ENCODE measurements at regions of chr17 and their contacts with region 1.

Region 1: DNA sequence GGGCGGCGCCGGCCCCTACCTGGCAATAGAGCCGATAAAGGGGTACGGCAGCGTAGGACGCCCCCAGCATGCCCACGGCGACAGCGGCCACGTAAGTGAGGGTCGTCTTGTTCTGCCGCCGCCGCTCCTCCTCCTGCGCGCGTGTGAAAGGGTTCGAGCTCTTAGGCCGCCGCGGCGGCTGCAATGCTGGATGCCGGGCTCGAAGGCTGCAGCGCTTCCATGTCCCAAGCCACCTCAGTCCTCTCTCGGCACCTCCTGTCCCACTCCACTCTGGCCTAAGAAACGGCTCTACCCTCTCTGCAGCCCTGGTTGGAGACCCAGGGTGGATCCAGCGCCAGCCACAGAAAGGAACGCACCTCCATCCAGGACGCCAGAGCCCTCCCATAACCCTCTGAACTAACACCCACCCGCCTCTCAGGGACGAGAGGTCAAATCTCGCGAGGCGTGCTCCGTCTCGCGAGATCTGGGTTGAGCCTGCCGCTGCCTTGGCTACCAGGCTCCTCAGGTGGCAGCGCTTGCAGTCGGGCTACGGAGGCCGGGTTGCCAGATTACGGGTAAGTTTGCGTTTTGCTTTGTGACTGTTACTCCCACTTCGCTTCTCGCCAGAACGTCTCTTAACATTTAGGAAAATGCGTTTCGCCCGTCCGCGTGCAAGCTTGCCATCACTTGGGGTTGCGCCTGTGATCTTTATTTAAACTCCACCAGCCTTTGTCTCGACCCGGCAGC is at the starts of genes COX11 and STXBP4:
- DNase-seq: peak; percentile 90 to 98
- H3K4me3 ChIP-seq: peak within 1 kb of the TSS; percentile 75 to 95
- H3K27ac ChIP-seq: peak within 1 kb of the TSS; percentile 82 to 90
- H3K4me1 ChIP-seq: peaks cover 4 to 11% of the 10 kb centered on the region in 2 donors
- H3K27me3 ChIP-seq: no peaks in the 10 kb centered on the region
- CTCF ChIP-seq: peak in 1 of 3 experiments; percentile 51
- total RNA-seq, gene COX11: 19.6 TPM
- total RNA-seq, gene STXBP4: 4.9 TPM

Region 2: GRCh38 chr17:54900457-54901229 is 67.8 kb before region 1 on chr17 and contains the start of gene TOM1L1:
- intact Hi-C with region 1: loop called (anchors 1 kb)
- DNase-seq: peak; percentile 14 to 81
- H3K4me3 ChIP-seq: peak within 1 kb of the TSS; percentile 68 to 69
- H3K27ac ChIP-seq: peak within 1 kb of the TSS in 1 of 2 donors; percentile 41
- H3K4me1 ChIP-seq: no peaks in the 10 kb centered on the region
- H3K27me3 ChIP-seq: no peaks in the 10 kb centered on the region
- CTCF ChIP-seq: peak in 1 of 3 experiments; percentile 6
- total RNA-seq, gene TOM1L1: 31.0 TPM

Region 3: DNA sequence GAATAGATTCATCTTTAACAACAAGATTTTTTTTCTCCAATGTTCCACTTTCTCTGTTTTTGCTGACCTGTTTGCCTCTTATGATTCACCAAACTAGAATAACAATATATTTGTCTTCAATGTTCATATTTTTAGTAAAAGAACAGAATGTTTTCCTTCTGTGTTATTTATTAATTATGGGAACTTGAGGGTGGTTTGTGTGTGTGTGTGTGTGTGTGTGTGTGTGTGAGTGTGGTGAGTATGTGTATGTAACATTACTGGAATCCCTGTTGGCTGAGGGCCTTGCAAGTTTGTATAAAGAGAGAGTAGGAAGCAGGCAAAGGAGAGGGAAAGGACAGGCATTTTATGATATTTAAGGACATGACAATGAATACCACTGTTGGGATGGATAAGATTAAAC is 14.0 kb after region 1 on chr17:
- intact Hi-C with region 1: no loop called
- DNase-seq: peak in 1 of 2 donors; percentile 78
- H3K4me3 ChIP-seq: no peak overlapping the region
- H3K27ac ChIP-seq: peak overlapping the region; percentile 62 to 69
- H3K4me1 ChIP-seq: peaks cover 0 to 14% of the 10 kb centered on the region in 2 donors
- H3K27me3 ChIP-seq: no peaks in the 10 kb centered on the region
- CTCF ChIP-seq: no peak

Region 4: GRCh38 chr17:55152236-55152635 is 183.8 kb after region 1 on chr17:
- intact Hi-C with region 1: no loop called
- DNase-seq: no peak
- H3K4me3 ChIP-seq: no peak overlapping the region
- H3K27ac ChIP-seq: no peak overlapping the region
- H3K4me1 ChIP-seq: no peaks in the 10 kb centered on the region
- H3K27me3 ChIP-seq: no peaks in the 10 kb centered on the region
- CTCF ChIP-seq: no peak